CD4-positive, alpha-beta T cell (primary cell): ENCODE measurements at regions of chr2 and their contacts with region 1.

Region 1: DNA sequence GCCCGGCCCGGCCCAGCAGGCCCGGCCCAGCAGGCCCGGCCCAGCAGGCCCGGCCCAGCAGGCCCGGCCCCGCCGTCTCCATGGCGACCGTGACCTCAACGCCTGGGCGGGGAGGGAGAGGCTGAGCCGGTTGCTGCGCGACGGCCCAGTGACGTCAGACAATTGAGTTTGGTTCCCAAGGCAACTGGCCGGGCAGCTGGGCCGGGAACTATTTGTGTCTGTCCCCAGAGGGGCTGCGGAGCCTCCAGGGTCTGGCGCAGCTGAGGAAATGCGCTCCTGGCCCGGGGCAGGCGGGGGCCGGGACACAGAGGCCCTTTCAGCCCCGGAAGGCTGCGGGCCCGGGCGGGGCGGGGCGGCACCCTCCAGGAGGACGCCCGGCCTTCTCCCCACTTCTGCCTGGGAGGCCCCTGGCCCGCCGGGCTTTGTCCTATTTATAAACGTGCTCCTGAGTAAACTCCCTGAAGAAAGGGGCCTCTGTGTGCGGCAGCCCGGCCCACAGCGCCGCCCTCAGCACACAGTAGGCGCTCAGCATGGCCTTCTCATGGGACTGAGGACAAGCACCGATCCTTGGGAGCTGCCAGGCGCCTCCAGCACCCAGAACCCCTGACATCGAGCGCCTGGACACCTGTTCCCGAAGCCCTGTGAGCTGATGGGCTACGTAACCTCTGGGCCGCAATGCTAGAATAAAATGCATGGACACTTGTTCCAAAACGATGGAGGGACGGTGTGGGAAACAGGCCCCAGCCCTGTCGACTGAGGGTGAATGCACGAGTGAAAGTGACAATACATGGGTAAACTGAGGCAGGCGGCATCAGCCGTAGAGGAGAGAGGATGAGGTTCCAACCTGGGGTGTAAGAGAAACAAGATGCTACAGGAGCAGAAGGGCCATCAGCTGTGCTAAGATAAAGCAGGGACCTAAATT is 12.3 kb downstream of the TEX44 start:
- DNase-seq: peak; percentile 86 to 99 (median 95)
- ATAC-seq: peak; percentile 79
- H3K4me3 ChIP-seq: peak overlapping the region; percentile 41
- H3K4me3 Mint-ChIP-seq: peak overlapping the region; percentile 65
- H3K27ac ChIP-seq: peak overlapping the region in 1 of 2 donors; percentile 45
- H3K27ac Mint-ChIP-seq: peak overlapping the region; percentile 74
- H3K4me1 ChIP-seq: peaks cover 23% of the 10 kb centered on the region
- H3K4me1 Mint-ChIP-seq: peaks cover 12% of the 10 kb centered on the region
- H3K27me3 ChIP-seq: no peaks in the 10 kb centered on the region
- H3K27me3 Mint-ChIP-seq: no peaks in the 10 kb centered on the region
- CTCF ChIP-seq: no peak

Region 2: DNA sequence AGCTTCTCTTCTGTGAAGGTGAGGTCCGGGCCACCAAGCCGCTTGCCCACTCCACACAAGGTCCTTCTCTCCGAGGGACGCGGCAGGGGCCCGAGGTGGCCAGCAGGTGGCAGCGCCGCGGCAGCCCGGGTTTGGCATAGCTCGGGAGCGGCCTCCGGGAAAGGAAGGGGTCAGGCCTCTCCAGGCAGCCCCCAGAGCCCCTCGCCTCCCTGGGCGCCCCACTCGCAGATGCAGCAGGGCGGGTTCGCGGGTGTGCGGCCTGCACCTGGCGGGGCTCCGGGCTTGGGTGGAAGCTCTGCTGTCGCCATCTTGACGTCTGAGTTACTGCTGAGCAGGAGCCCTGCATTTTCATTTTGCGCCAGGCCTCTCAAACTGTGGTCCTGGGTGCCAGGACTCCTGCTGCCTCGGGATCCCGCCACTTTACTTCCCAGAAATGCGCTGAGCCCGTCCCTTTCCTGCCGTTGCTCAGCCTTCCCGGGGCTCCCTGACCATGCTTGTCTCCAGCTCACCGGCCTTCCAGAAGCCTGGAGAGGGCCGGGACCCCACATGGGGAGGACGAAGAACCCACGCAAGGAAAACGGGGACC is 122.0 kb before region 1 on chr2:
- CTCF ChIA-PET with region 1: interaction called, 3 read pairs
- POLR2A ChIA-PET with region 1: no interaction called
- intact Hi-C with region 1: loop called in 1 of 2 experiments (anchors 5 kb)
- DNase-seq: peak; percentile 46 to 85 (median 65)
- ATAC-seq: peak; percentile 77
- H3K4me3 ChIP-seq: peak overlapping the region; percentile 78
- H3K4me3 Mint-ChIP-seq: peak overlapping the region; percentile 78
- H3K27ac ChIP-seq: peak overlapping the region; percentile 70 to 88
- H3K27ac Mint-ChIP-seq: peak overlapping the region; percentile 87
- H3K4me1 ChIP-seq: peaks cover 21% of the 10 kb centered on the region
- H3K4me1 Mint-ChIP-seq: peaks cover 11% of the 10 kb centered on the region
- H3K27me3 ChIP-seq: no peaks in the 10 kb centered on the region
- H3K27me3 Mint-ChIP-seq: no peaks in the 10 kb centered on the region
- CTCF ChIP-seq: peak; percentile 91

Region 3: GRCh38 chr2:231514103-231514950 is 90.6 kb before region 1 on chr2:
- CTCF ChIA-PET with region 1: interaction called, 21 read pairs
- POLR2A ChIA-PET with region 1: interaction called, 4 read pairs
- intact Hi-C with region 1: loop called in 1 of 2 experiments (anchors 1 kb)
- DNase-seq: peak; percentile 96 to 99 (median 98)
- ATAC-seq: peak; percentile 96
- H3K4me3 ChIP-seq: peak overlapping the region; percentile 78
- H3K4me3 Mint-ChIP-seq: peak overlapping the region; percentile 91
- H3K27ac ChIP-seq: peak overlapping the region; percentile 87 to 95
- H3K27ac Mint-ChIP-seq: peak overlapping the region; percentile 94
- H3K4me1 ChIP-seq: peaks cover 12% of the 10 kb centered on the region
- H3K4me1 Mint-ChIP-seq: peaks cover 24% of the 10 kb centered on the region
- H3K27me3 ChIP-seq: no peaks in the 10 kb centered on the region
- H3K27me3 Mint-ChIP-seq: no peaks in the 10 kb centered on the region
- CTCF ChIP-seq: no peak

Region 4: DNA sequence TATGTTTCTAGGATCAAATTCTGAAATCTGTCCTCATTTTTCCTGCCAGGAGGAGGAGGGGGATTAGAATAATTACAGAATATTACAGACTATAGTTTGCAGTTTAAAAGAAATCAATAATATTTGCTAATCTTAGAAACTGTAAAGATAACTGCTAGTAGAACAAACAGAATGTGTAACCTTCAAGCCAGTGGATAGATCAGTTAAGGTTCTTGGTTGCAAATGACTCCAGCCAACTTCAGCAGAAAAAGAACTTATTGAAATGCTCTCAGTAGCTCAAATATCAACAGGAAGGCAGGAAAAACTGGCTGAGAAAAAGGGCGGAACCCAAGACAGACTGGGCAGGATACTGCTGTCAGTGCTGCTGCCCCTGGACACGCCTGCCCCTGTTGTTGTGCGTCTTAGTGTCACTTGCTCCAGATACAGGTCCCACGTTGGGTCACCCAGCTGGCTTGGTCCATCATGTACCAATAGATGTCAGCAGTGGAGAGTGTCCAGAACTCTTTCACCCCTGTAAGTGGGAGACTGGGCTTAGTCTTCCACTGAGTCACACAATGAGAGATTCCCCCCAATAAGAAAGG is 84.9 kb before region 1 on chr2:
- CTCF ChIA-PET with region 1: interaction called, 21 read pairs
- POLR2A ChIA-PET with region 1: interaction called, 4 read pairs
- intact Hi-C with region 1: loop called (anchors 1 to 2 kb)
- DNase-seq: no peak
- ATAC-seq: no peak
- H3K4me3 ChIP-seq: no peak overlapping the region
- H3K4me3 Mint-ChIP-seq: no peak overlapping the region
- H3K27ac ChIP-seq: no peak overlapping the region
- H3K27ac Mint-ChIP-seq: no peak overlapping the region
- H3K4me1 ChIP-seq: peaks cover 23% of the 10 kb centered on the region
- H3K4me1 Mint-ChIP-seq: peaks cover 10% of the 10 kb centered on the region
- H3K27me3 ChIP-seq: no peaks in the 10 kb centered on the region
- H3K27me3 Mint-ChIP-seq: no peaks in the 10 kb centered on the region
- CTCF ChIP-seq: no peak